ENCODE measurements at regions of chr6 and their contacts with region 1.

Region 1: GRCh38 chr6:158220786-158221442 is 52.8 kb downstream of the GTF2H5 start:
- DNase-seq: peak; percentile 88
- ATAC-seq: peak; percentile 97

Region 2: DNA sequence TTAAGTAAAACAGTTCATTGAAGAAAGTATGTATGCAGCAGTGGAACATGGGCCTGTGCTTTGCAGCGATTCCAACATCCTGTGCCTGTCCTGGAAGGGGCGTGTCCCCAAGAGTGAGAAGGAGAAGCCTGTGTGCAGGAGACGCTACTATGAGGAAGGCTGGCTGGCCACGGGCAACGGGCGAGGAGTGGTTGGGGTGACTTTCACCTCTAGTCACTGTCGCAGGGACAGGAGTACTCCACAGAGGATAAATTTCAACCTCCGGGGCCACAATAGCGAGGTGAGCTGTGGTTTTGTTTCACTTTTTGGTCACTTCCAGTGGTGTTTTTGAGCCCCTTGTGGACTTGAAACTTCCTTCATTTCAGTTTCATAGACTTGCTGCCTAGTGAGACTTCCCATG is 93.1 kb after region 1 on chr6:
- intact Hi-C with region 1: no loop called
- DNase-seq: peak; percentile 44
- ATAC-seq: no peak

Region 3: GRCh38 chr6:158518191-158519127 is 297.5 kb after region 1 on chr6:
- intact Hi-C with region 1: loop called (anchors 5 kb)
- DNase-seq: peak; percentile 55
- ATAC-seq: peak; percentile 69

Region 4: DNA sequence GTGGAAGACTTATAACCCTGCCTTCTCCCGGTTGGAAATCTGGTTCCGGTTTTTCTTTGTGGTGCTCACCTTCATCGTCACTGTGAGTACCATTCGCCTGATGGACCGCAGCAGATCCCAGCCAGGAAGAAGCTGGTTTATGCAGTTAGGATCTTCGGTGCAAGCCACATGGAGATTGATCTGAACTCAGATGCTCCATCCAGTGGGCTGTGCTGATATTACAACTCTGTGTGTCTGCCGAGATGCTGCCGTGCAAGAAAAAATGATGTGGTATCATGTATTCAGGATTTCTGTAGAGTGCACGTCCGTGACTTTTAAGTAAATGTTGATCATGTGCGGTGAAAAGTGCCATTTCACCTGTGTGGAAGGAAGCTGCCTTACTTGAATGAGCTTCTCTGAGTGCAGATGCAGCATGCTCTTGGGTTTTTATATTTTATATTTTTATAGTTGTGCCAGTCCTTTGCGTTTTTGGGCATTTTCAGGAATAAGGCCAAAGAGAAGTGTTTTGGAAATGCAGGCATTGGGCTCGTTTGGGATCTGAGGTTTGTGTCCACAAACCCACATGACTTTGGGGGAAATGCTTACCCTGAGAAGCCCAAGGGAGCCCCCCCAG is 384.5 kb after region 1 on chr6:
- intact Hi-C with region 1: loop called (anchors 10 kb)
- DNase-seq: no peak
- ATAC-seq: peak; percentile 66

Region 5: GRCh38 chr6:158686791-158687381 is 466.0 kb after region 1 on chr6:
- intact Hi-C with region 1: loop called (anchors 10 kb)
- DNase-seq: no peak
- ATAC-seq: peak; percentile 51